ENCODE measurements at regions of chr22 and their contacts with region 1.

Region 1: GRCh38 chr22:21587803-21588611 is 20.5 kb downstream of the UBE2L3 start:
- DNase-seq: no peak
- H3K4me3 ChIP-seq: no peak overlapping the region
- H3K27ac ChIP-seq: no peak overlapping the region
- H3K4me1 ChIP-seq: peaks cover 15% of the 10 kb centered on the region
- H3K27me3 ChIP-seq: no peaks in the 10 kb centered on the region
- CTCF ChIP-seq: no peak
- EP300 ChIP-seq: no peak
- POLR2A ChIP-seq: no peak

Region 2: DNA sequence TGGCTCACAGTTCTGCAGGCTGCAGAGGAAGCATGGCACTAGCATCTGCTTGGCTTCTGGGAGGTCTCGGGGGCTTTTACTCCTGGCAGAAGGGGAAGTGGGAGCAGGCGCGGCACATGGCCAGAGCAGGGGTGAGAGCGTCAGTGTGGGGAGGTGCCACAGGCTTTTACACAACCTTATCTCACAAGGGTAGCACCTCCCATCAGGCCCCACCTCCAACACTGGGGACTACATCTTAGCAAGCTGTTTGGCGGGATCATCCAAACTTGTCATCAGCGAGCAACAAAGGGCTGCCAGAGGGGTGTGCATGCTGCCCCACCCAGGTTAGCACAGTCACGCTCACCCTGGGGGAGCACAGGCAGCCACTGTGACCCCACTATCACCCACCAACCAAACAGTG is 166.5 kb after region 1 on chr22:
- intact Hi-C with region 1: no loop called
- DNase-seq: peak; percentile 42 to 69 (median 53)
- H3K4me3 ChIP-seq: no peak overlapping the region
- H3K27ac ChIP-seq: no peak overlapping the region
- H3K4me1 ChIP-seq: peaks cover 24% of the 10 kb centered on the region
- H3K27me3 ChIP-seq: no peaks in the 10 kb centered on the region
- CTCF ChIP-seq: no peak
- EP300 ChIP-seq: no peak
- POLR2A ChIP-seq: no peak

Region 3: GRCh38 chr22:23069502-23070357 is 1481.7 kb after region 1 on chr22:
- intact Hi-C with region 1: loop called in 1 of 4 experiments (anchors 5 kb)
- DNase-seq: peak; percentile 91 to 96 (median 95)
- H3K4me3 ChIP-seq: peak overlapping the region; percentile 49
- H3K27ac ChIP-seq: peak overlapping the region in 1 of 2 donors; percentile 68
- H3K4me1 ChIP-seq: peaks cover 5% of the 10 kb centered on the region
- H3K27me3 ChIP-seq: no peaks in the 10 kb centered on the region
- CTCF ChIP-seq: peak in 1 of 3 donors; percentile 20
- EP300 ChIP-seq: no peak
- POLR2A ChIP-seq: no peak